MCF 10A (cell line): ENCODE measurements at regions of chr10 and their contacts with region 1.

Region 1: GRCh38 chr10:99630439-99630838 is 10.2 kb upstream of the SLC25A28 start:
- DNase-seq: peak; percentile 73
- H3K4me3 Mint-ChIP-seq: no peak overlapping the region
- H3K27ac Mint-ChIP-seq: no peak overlapping the region
- H3K4me1 Mint-ChIP-seq: peaks cover 6% of the 10 kb centered on the region
- H3K27me3 Mint-ChIP-seq: no peaks in the 10 kb centered on the region
- CTCF ChIP-seq: peak; percentile 63

Region 2: DNA sequence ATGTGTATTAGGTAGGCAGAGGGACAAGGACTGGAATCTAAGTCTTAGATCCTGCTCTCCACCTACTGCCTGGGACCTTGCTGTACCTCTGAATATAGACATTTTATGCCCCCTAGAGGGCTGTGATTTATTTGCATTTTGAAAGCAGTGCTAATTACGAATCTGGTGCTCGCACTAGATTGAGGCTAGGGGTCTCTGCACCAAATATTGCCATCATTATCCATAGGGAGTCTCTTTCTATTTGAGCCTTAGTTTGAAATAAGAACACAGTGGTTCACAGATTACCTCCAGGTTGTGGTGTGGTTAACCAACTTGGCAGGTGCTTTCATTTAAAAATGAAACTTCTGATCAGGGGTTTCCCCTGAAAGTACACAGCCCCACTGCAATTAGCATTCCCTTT is 259.4 kb before region 1 on chr10:
- CTCF ChIA-PET with region 1: no interaction called
- POLR2A ChIA-PET with region 1: no interaction called
- intact Hi-C with region 1: no loop called
- DNase-seq: peak; percentile 43
- H3K4me3 Mint-ChIP-seq: no peak overlapping the region
- H3K27ac Mint-ChIP-seq: no peak overlapping the region
- H3K4me1 Mint-ChIP-seq: peaks cover 11% of the 10 kb centered on the region
- H3K27me3 Mint-ChIP-seq: peaks cover 42% of the 10 kb centered on the region
- CTCF ChIP-seq: peak; percentile 47

Region 3: DNA sequence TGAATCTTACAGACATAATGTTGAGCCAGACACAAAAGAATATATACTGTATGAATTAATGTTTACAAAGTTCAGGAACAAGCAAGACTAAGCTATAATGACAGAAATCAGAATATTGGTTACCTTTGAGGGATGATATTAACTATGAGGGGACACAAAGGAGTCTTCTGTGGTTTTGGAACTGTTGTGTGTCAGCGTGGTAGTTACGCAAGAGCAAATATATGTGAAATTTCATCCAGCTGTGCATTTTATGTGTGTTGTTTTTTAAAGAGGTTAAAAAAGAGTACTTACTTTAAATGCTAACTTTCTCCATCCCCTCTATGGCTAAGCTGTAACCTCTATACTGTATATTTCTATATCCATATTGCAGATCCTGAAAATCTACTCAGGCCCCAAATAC is 25.1 kb before region 1 on chr10:
- CTCF ChIA-PET with region 1: no interaction called
- POLR2A ChIA-PET with region 1: no interaction called
- intact Hi-C with region 1: no loop called
- DNase-seq: no peak
- H3K4me3 Mint-ChIP-seq: no peak overlapping the region
- H3K27ac Mint-ChIP-seq: no peak overlapping the region
- H3K4me1 Mint-ChIP-seq: no peaks in the 10 kb centered on the region
- H3K27me3 Mint-ChIP-seq: no peaks in the 10 kb centered on the region
- CTCF ChIP-seq: no peak

Region 4: GRCh38 chr10:99652806-99653381 is 22.5 kb after region 1 on chr10:
- CTCF ChIA-PET with region 1: interaction called, 11 read pairs
- POLR2A ChIA-PET with region 1: interaction called, 31 read pairs
- intact Hi-C with region 1: no loop called
- DNase-seq: no peak
- H3K4me3 Mint-ChIP-seq: no peak overlapping the region
- H3K27ac Mint-ChIP-seq: no peak overlapping the region
- H3K4me1 Mint-ChIP-seq: peaks cover 28% of the 10 kb centered on the region
- H3K27me3 Mint-ChIP-seq: no peaks in the 10 kb centered on the region
- CTCF ChIP-seq: no peak

Region 5: GRCh38 chr10:99685597-99685967 is 55.1 kb after region 1 on chr10:
- CTCF ChIA-PET with region 1: interaction called, 13 read pairs
- POLR2A ChIA-PET with region 1: interaction called, 26 read pairs
- intact Hi-C with region 1: loop called (anchors 2 kb)
- DNase-seq: peak; percentile 11
- H3K4me3 Mint-ChIP-seq: no peak overlapping the region
- H3K27ac Mint-ChIP-seq: peak overlapping the region; percentile 88
- H3K4me1 Mint-ChIP-seq: peaks cover 27% of the 10 kb centered on the region
- H3K27me3 Mint-ChIP-seq: no peaks in the 10 kb centered on the region
- CTCF ChIP-seq: no peak

Region 6: DNA sequence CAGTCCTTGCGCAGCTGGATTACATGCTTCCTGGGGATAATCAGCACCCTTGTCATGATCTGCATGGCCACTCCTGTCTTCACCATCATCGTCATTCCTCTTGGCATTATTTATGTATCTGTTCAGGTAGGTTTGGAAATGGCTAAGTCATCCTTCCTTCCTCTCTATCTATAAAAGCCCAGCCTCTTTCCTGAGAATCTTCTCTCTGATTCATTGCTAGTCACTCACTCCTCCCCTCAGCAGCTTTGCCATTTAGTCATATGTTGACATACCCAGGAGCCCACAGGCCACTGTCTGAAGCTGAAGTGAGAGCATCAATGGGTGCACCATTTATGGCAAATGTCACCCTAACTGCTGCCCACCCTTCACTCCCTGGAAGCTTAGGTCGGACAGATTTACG is 204.0 kb after region 1 on chr10:
- CTCF ChIA-PET with region 1: no interaction called
- POLR2A ChIA-PET with region 1: no interaction called
- intact Hi-C with region 1: no loop called
- DNase-seq: peak; percentile 60
- H3K4me3 Mint-ChIP-seq: no peak overlapping the region
- H3K27ac Mint-ChIP-seq: no peak overlapping the region
- H3K4me1 Mint-ChIP-seq: peaks cover 7% of the 10 kb centered on the region
- H3K27me3 Mint-ChIP-seq: no peaks in the 10 kb centered on the region
- CTCF ChIP-seq: no peak